IMR-90 (cell line): ENCODE measurements at regions of chr14 and their contacts with region 1.

Region 1: DNA sequence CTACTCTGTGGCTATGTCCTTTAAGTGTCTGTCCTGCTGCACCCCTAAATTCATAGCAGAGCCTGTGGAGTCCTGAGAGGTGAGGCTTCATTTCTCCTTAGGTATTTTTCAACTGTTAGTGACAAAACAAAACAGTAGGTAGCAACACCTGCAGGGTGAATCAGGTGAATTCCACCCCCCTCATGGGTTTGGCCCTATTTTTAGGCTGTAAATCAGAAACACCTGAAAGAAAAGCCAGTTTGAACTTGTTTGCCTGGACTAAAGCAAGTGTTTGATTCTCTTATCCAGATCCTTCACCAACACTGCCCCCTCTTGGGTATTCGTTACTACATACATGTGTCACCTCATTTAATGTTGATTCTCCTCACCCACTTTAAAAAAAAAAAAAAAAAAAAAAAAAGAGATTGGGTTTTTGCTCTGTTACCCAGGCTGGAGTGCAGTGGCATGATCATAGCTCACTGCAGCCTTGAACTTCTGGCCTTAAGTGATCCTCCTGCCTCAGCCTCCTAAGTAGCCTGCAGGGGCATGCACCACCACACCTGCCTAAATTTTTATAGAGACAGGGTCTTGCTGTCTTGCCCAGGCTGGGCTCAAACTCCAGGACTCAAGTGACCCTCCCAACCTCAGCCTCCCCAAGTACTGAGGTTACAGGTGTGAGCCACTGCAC is 10.3 kb downstream of the TBPL2 start:
- DNase-seq: peak; percentile 86
- ATAC-seq: peak; percentile 93
- H3K4me3 ChIP-seq: no peak overlapping the region
- H3K27ac ChIP-seq: no peak overlapping the region
- H3K4me1 ChIP-seq: no peaks in the 10 kb centered on the region
- H3K27me3 ChIP-seq: peaks cover 6% of the 10 kb centered on the region
- CTCF ChIP-seq: peak; percentile 72
- POLR2A ChIP-seq: no peak
- RAD21 ChIP-seq: peak; percentile 82

Region 2: DNA sequence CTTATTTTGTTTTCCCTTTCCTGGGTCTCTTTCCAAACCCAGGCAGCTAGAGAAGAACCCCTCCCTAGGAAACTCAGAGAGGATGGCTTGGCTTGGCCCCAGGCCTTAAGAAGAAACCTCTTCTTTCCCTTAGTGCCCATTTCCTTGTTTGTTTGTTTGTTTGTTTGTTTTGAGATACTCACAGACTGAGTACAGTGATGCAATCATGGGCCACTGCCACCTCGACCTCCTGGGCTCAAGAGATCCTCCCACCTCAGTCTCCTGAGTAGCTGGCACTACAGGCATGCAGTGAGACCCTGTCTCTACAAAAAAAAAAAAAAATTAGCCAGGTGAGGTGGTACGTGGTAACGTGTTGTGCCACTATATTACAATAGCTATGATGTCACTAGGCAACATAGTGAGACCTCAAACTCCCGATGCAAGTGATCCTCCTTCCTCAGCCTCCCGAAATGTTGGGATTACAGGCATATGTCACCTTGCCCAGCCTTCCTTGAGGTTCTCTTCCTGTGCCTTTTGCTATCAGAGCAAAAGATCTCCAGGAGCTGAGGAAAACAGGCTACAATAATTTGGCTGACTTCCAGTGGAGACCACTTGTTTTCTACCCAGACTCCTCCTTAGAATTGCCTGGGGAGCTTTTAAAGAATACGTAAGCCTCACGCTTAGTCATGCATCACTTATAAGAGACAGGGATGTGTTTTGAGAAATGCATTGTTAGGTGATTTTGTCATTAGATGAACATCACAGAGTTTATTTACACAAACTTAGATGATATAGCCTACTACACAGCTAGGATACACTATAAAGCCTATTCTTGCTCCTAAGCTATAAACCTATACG is 335.6 kb before region 1 on chr14:
- CTCF ChIA-PET with region 1: no interaction called
- POLR2A ChIA-PET with region 1: no interaction called
- dilution Hi-C with region 1: no loop called
- in situ Hi-C with region 1: no loop called
- intact Hi-C with region 1: loop called (anchors 5 kb)
- DNase-seq: peak; percentile 85
- ATAC-seq: peak; percentile 79
- H3K4me3 ChIP-seq: no peak overlapping the region
- H3K27ac ChIP-seq: no peak overlapping the region
- H3K4me1 ChIP-seq: peaks cover 3% of the 10 kb centered on the region; the same call in 1 of the 2 replicates
- H3K27me3 ChIP-seq: no peaks in the 10 kb centered on the region
- CTCF ChIP-seq: no peak
- POLR2A ChIP-seq: no peak
- RAD21 ChIP-seq: no peak

Region 3: GRCh38 chr14:55191203-55192053 is 238.7 kb before region 1 on chr14 and contains the start of gene DLGAP5:
- CTCF ChIA-PET with region 1: no interaction called
- POLR2A ChIA-PET with region 1: no interaction called
- dilution Hi-C with region 1: no loop called
- in situ Hi-C with region 1: no loop called
- intact Hi-C with region 1: no loop called
- DNase-seq: peak; percentile 94
- ATAC-seq: peak; percentile 98
- H3K4me3 ChIP-seq: peak within 1 kb of the TSS; percentile 52
- H3K27ac ChIP-seq: peak within 1 kb of the TSS; percentile 40
- H3K4me1 ChIP-seq: no peaks in the 10 kb centered on the region
- H3K27me3 ChIP-seq: no peaks in the 10 kb centered on the region
- CTCF ChIP-seq: no peak
- POLR2A ChIP-seq: 0 out of 2 replicates have a peak, but pooled peaks have one; percentile 35
- RAD21 ChIP-seq: no peak
- total RNA-seq, gene DLGAP5: 19.0 and 40.3 TPM in 2 replicates

Region 4: GRCh38 chr14:55212634-55213033 is 217.5 kb before region 1 on chr14:
- CTCF ChIA-PET with region 1: interaction called, 3 read pairs
- POLR2A ChIA-PET with region 1: no interaction called
- dilution Hi-C with region 1: no loop called
- in situ Hi-C with region 1: loop called (anchors 5 kb)
- intact Hi-C with region 1: loop called (anchors 1 kb)
- DNase-seq: no peak
- ATAC-seq: no peak
- H3K4me3 ChIP-seq: no peak overlapping the region
- H3K27ac ChIP-seq: no peak overlapping the region
- H3K4me1 ChIP-seq: no peaks in the 10 kb centered on the region
- H3K27me3 ChIP-seq: no peaks in the 10 kb centered on the region
- CTCF ChIP-seq: no peak
- POLR2A ChIP-seq: no peak
- RAD21 ChIP-seq: no peak

Region 5: DNA sequence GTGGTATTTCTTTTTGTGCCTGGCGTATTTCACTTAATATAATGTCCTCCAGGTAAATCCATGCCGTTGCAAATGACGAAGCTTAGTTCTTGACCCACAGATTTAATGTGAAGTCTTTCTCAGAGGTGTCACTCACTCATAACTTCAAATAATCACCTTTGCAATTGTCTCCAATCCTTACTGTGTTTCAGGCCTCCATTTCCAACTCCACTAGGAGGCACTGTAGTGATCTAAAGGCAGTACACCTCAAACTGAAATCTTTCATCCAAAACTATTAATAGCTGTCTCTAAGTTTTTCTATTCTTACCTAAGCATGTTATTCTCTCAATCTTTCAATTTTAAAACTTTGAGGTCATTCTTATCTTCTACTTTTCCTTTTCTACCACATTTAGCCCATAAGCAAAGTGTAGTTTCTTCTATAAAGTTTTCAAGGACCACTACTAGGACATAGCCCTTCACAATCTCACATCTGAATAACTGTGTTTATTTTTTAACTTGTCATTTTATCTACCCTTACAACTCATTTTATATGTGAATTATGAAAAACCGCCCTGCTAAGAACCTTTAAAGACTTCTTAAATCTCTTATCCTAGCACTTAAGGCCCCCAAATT is 184.4 kb before region 1 on chr14:
- CTCF ChIA-PET with region 1: interaction called, 3 read pairs
- POLR2A ChIA-PET with region 1: no interaction called
- dilution Hi-C with region 1: no loop called
- in situ Hi-C with region 1: no loop called
- intact Hi-C with region 1: loop called (anchors 1 kb)
- DNase-seq: peak; percentile 42
- ATAC-seq: 0 out of 2 replicates have a peak, but pooled peaks have one; percentile 35
- H3K4me3 ChIP-seq: no peak overlapping the region
- H3K27ac ChIP-seq: no peak overlapping the region
- H3K4me1 ChIP-seq: peaks cover 2% of the 10 kb centered on the region; the same call in 1 of the 2 replicates
- H3K27me3 ChIP-seq: peaks cover 24% of the 10 kb centered on the region
- CTCF ChIP-seq: peak; percentile 64
- POLR2A ChIP-seq: no peak
- RAD21 ChIP-seq: peak; percentile 59

Region 6: DNA sequence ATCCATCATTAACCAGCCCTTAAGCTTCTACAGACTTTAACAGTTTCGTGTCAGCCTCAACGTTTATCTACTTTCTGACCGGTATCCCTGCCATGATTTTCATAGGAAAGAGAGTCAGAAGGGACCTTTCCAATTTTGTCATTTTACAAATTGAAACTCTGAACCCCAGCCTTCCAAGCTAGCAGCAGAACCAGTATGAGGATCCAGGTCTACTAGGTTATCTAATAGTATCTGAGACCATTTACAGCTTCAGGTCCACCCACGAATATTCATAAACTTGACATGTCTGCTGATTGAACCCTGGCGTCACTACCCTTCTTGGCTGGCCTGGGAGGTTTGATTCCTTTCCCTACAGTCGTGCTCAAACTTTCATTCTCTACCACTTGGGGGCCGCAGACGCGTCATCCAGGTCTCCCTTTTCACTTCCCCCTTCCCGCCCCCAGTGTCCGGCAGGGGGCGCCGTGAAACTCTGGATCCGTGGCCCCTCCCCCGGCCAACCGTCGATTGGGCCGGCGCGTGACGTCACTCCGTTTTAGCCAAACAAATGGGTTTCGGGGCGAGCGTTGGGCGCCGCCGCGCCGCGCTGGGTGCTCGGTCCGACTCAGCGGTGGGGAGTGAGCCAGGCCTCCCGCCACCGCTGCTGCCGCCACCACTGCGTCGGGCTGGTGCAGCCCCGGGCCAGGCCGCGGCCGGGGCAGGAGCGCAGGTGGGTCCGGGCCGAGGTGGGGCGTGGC is 159.2 kb before region 1 on chr14 and contains the start of gene FBXO34:
- CTCF ChIA-PET with region 1: no interaction called
- POLR2A ChIA-PET with region 1: no interaction called
- dilution Hi-C with region 1: no loop called
- in situ Hi-C with region 1: no loop called
- intact Hi-C with region 1: loop called (anchors 1 kb)
- DNase-seq: peak; percentile 94
- ATAC-seq: peak; percentile 93
- H3K4me3 ChIP-seq: peak within 1 kb of the TSS; percentile 100
- H3K27ac ChIP-seq: peak within 1 kb of the TSS; percentile 58
- H3K4me1 ChIP-seq: peaks cover 2% of the 10 kb centered on the region
- H3K27me3 ChIP-seq: no peaks in the 10 kb centered on the region
- CTCF ChIP-seq: peak; percentile 100; the same call in 1 of the 2 replicates
- POLR2A ChIP-seq: peak; percentile 80
- RAD21 ChIP-seq: peak; percentile 68
- total RNA-seq, gene FBXO34: 27.8 and 35.1 TPM in 2 replicates

Region 7: GRCh38 chr14:55416866-55417265 is 13.3 kb before region 1 on chr14:
- CTCF ChIA-PET with region 1: interaction called, 12 read pairs
- POLR2A ChIA-PET with region 1: no interaction called
- dilution Hi-C with region 1: no loop called
- in situ Hi-C with region 1: no loop called
- intact Hi-C with region 1: no loop called
- DNase-seq: no peak
- ATAC-seq: no peak
- H3K4me3 ChIP-seq: no peak overlapping the region
- H3K27ac ChIP-seq: no peak overlapping the region
- H3K4me1 ChIP-seq: peaks cover 2% of the 10 kb centered on the region; the same call in 1 of the 2 replicates
- H3K27me3 ChIP-seq: peaks cover 1% of the 10 kb centered on the region; the same call in 1 of the 2 replicates
- CTCF ChIP-seq: peak; percentile 43
- POLR2A ChIP-seq: no peak
- RAD21 ChIP-seq: peak; percentile 31; the same call in 1 of the 2 replicates

Region 8: DNA sequence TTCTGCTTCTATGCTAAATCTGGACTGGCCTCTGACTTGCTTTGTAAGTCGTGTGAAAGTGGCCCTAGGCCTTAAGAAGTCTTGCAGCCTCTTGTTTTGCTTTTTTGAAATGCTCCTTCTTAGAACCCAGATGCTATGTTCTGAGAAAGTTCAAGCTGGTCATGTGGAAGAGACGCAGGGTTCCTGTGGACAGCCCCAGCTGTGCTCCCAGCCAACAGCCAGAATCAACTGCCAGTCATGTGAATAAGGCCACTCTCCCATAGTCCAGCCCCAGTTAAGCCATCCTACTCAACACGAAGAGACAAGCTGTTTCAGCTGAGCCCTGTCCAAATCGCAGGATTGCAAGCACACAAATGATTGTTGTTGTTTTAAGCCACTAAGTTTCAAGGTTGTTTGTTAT is 47.5 kb after region 1 on chr14:
- CTCF ChIA-PET with region 1: no interaction called
- POLR2A ChIA-PET with region 1: no interaction called
- dilution Hi-C with region 1: no loop called
- in situ Hi-C with region 1: no loop called
- intact Hi-C with region 1: no loop called
- DNase-seq: no peak
- ATAC-seq: no peak
- H3K4me3 ChIP-seq: no peak overlapping the region
- H3K27ac ChIP-seq: no peak overlapping the region
- H3K4me1 ChIP-seq: no peaks in the 10 kb centered on the region
- H3K27me3 ChIP-seq: no peaks in the 10 kb centered on the region
- CTCF ChIP-seq: no peak
- POLR2A ChIP-seq: no peak
- RAD21 ChIP-seq: no peak